Aorta (tissue), 5 donors: ENCODE measurements at regions of chr4 and their contacts with region 1.

Region 1: DNA sequence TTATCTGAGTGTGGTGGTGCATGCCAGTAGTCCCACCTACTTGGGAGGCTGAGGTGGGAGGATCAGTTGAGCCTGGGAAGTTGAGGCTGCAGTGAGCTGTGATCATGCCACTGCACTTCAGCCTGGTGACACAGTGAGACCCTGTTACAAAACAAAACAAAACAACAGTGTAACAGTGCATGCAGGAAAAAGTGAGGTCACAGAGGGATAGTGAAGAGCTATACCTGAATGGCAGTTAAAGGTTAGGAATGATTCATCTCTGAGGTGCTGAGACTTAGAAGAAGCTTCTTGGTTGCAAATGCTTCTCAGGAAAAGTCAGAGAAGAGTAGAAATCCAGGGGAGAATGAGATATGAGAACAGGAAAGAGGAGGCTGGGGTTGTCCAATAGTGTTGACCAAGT is 178.7 kb downstream of the FRAS1 start:
- DNase-seq: no peak
- ATAC-seq: no peak
- H3K4me3 ChIP-seq: no peak overlapping the region
- H3K27ac ChIP-seq: no peak overlapping the region
- H3K4me1 ChIP-seq: no peaks in the 10 kb centered on the region
- H3K27me3 ChIP-seq: no peaks in the 10 kb centered on the region

Region 2: DNA sequence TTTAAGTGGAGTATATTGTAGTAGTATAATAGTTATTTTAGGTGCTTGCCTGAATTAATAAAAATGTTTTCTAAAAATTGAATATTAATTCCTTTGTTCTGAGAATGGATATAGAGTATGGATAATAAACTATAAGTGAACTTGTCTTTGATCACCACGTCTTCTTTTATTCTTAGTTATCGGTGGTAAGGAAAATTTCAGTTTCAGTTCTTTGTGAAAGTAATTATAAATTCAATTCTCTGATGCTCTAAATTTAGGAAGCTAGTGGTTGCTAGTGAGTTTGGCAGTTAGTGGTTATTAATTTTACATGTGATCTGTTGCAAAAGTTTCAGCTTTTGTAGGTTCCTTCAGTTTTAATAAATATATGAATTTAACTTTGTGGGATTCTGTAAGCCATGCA is 342.3 kb before region 1 on chr4:
- intact Hi-C with region 1: no loop called
- DNase-seq: no peak
- ATAC-seq: no peak
- H3K4me3 ChIP-seq: no peak overlapping the region
- H3K27ac ChIP-seq: no peak overlapping the region
- H3K4me1 ChIP-seq: no peaks in the 10 kb centered on the region
- H3K27me3 ChIP-seq: no peaks in the 10 kb centered on the region

Region 3: DNA sequence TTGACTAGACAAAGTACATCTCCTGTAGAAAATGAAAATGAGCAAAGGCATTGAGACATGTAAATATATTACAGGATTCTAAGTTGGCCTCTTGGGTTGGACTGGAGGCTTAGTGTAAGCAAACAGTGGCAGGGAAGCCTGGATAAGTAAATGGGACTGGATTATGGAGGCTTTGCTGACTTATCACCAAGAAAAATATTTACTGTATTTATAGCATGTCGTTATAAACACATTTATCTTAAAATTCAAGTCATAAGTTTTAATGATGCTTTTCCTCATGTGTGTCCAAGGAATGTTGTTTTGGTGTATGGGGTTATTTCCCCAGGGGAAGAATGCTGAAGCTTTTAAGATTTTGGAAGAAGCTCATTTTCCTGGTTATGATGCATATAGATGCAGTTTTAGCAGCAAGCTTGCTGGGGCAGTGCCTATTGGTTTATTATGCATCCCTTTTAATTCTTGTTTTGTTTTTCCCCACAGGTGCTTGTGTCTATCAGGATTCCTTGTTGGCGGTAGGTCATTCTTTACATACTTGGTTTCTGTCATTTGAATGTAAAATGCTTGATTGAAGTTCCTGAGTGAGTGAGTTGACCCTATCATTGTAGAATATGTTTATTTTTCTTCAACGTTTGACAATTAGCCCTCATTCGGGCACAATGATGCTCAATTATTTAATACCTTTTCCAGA is 170.2 kb before region 1 on chr4:
- intact Hi-C with region 1: no loop called
- DNase-seq: no peak
- ATAC-seq: no peak
- H3K4me3 ChIP-seq: no peak overlapping the region
- H3K27ac ChIP-seq: no peak overlapping the region
- H3K4me1 ChIP-seq: no peaks in the 10 kb centered on the region
- H3K27me3 ChIP-seq: no peaks in the 10 kb centered on the region

Region 4: GRCh38 chr4:78166637-78167036 is 69.2 kb before region 1 on chr4:
- intact Hi-C with region 1: no loop called
- DNase-seq: no peak
- ATAC-seq: no peak
- H3K4me3 ChIP-seq: no peak overlapping the region
- H3K27ac ChIP-seq: no peak overlapping the region
- H3K4me1 ChIP-seq: no peaks in the 10 kb centered on the region
- H3K27me3 ChIP-seq: no peaks in the 10 kb centered on the region

Region 5: DNA sequence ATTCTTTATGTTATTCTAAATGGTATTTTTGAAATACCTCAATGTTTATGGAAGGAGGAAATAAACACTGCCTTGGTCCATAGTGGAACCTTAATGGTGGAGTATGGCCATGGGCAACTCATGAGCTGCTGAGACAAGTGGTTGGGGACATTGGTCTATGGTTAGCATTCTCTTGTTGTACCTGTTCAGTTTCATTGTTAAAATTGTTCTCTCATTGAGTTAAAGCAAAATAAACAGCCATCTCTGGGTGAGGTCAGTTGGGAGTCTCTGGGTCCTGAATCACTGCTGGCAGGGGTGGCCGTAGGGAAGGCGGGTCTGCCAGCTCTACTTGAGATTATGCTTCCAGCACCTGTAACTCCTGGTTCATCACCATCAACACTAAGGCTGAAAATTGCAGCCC is 58.5 kb before region 1 on chr4:
- intact Hi-C with region 1: loop called in 1 of 2 experiments (anchors 2 kb)
- DNase-seq: no peak
- ATAC-seq: no peak
- H3K4me3 ChIP-seq: no peak overlapping the region
- H3K27ac ChIP-seq: no peak overlapping the region
- H3K4me1 ChIP-seq: no peaks in the 10 kb centered on the region
- H3K27me3 ChIP-seq: peaks cover 0 to 2% of the 10 kb centered on the region in 2 donors